ENCODE measurements at regions of chr12 and their contacts with region 1.

Region 1: GRCh38 chr12:27305673-27306456 is 26.8 kb upstream of the BMAL2 start:
- DNase-seq: no peak
- ATAC-seq: peak; percentile 27
- H3K4me3 ChIP-seq: no peak overlapping the region
- H3K27ac ChIP-seq: peak overlapping the region in 1 of 4 donors; percentile 24
- H3K4me1 ChIP-seq: peaks cover 16% of the 10 kb centered on the region
- H3K27me3 ChIP-seq: no peaks in the 10 kb centered on the region
- CTCF ChIP-seq: peak; percentile 34 to 66 (median 52)
- POLR2A ChIP-seq: no peak

Region 2: DNA sequence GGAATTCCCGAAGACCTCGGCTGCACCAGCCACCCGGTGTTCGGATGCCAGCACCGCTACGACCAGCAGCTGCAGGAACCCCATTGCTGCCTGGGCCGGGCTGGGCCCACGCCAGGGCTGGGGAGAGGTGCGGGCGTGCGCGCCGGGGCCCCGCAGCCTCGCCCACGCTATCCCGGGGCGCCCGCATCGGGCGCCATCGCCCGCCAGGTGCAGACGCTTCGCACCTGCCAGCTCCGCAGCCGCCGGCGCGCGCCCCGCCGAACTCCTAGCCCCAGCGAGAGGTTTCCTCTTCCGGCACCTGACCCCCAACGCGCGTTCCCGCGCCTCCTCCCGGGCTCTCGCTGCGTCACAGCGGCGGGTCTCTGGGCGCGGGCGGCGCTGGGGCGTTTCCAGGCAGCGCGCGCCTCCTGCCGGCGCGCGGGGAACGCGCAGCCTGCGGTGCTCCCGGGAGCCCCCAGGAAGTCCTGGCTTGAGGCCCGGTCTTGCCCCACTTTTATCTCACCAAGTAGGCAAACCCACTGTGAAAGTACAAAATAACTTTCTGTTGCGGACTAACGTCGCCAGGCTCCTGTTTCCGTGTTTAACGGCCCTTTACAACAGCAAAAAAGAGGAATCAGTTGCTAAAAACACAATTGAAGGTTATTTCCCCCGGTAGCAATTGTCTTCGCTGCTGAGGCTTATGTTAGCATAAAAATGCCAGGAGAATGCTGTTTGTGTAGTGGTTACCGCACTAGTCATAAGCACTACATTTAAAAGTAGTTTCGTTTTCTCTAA is 291.6 kb before region 1 on chr12 and contains the start of gene TM7SF3:
- intact Hi-C with region 1: loop called (anchors 10 kb)
- DNase-seq: peak; percentile 95 to 97 (median 96)
- ATAC-seq: peak; percentile 81
- H3K4me3 ChIP-seq: peak within 1 kb of the TSS; percentile 56 to 81
- H3K27ac ChIP-seq: peak within 1 kb of the TSS; percentile 92 to 98 (median 95)
- H3K4me1 ChIP-seq: peaks cover 43% of the 10 kb centered on the region
- H3K27me3 ChIP-seq: no peaks in the 10 kb centered on the region
- CTCF ChIP-seq: peak; percentile 77 to 99 (median 98)
- POLR2A ChIP-seq: peak; percentile 79 to 92 (median 80)
- total RNA-seq, gene TM7SF3: 55.0 to 113 TPM

Region 3: GRCh38 chr12:27142101-27142721 is 163.7 kb before region 1 on chr12:
- intact Hi-C with region 1: loop called (anchors 10 kb)
- DNase-seq: peak; percentile 65 to 74 (median 68)
- ATAC-seq: peak; percentile 77
- H3K4me3 ChIP-seq: no peak overlapping the region
- H3K27ac ChIP-seq: no peak overlapping the region
- H3K4me1 ChIP-seq: no peaks in the 10 kb centered on the region
- H3K27me3 ChIP-seq: no peaks in the 10 kb centered on the region
- CTCF ChIP-seq: peak; percentile 49 to 74 (median 64)
- POLR2A ChIP-seq: no peak

Measured in body of pancreas (tissue), 4 donors.